ENCODE measurements at regions of chr14 and their contacts with region 1.

Region 1: DNA sequence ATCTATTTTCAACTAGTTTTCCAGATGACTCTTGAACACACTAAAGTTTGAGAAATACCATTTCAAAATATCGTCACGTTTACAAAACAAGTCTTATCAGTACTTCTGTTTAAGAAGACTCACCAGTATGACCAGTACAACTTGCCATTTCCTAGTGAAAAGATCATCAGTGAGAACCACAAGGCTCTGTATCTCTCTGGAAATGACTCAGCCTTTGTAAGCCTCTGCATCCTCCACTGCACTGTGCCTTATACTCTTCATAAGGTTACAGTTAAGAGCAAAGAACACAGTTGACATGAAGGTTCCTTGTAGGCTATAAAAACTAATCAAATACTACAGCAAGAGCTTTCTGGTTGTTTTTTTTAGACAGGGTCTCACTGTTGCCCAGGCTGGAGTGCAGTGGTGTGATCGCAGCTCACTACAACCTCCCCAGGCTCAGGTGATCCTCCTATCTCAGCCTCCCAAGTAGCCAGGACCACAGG is 5.7 kb upstream of the VTI1B start:
- DNase-seq: peak; percentile 54
- ATAC-seq: peak; percentile 94
- H3K4me3 Mint-ChIP-seq: no peak overlapping the region
- H3K27ac Mint-ChIP-seq: peak overlapping the region; percentile 63
- H3K4me1 Mint-ChIP-seq: peaks cover 42% of the 10 kb centered on the region
- H3K27me3 Mint-ChIP-seq: no peaks in the 10 kb centered on the region

Region 2: GRCh38 chr14:67695394-67695949 is 15.3 kb after region 1 on chr14 and contains the start of gene RDH11:
- CTCF ChIA-PET with region 1: interaction called, 9 read pairs
- POLR2A ChIA-PET with region 1: interaction called, 12 read pairs
- DNase-seq: peak; percentile 91
- ATAC-seq: peak; percentile 90
- H3K4me3 Mint-ChIP-seq: peak within 1 kb of the TSS; percentile 88
- H3K27ac Mint-ChIP-seq: peak within 1 kb of the TSS; percentile 95
- H3K4me1 Mint-ChIP-seq: peaks cover 29% of the 10 kb centered on the region
- H3K27me3 Mint-ChIP-seq: no peaks in the 10 kb centered on the region
- total RNA-seq, gene RDH11: 48.8 to 57.1 TPM

Measured in activated CD8-positive, alpha-beta T cell treated with anti-CD3 and anti-CD28 coated beads, Interleukin-2, amount 10 ng/mL, durations not matched to agents 7 days and 5 days (primary cell).